Activated CD4-positive, alpha-beta T cell treated with anti-CD3 and anti-CD28 coated beads for 36 hours (primary cell): ENCODE measurements at regions of chrX and their contacts with region 1.

Region 1: GRCh38 chrX:155263854-155264628 is at the start of gene RAB39B:
- DNase-seq: peak; percentile 88
- ATAC-seq: peak; percentile 90
- H3K4me3 Mint-ChIP-seq: peak within 1 kb of the TSS; percentile 89
- H3K27ac Mint-ChIP-seq: peak within 1 kb of the TSS; percentile 94
- H3K4me1 Mint-ChIP-seq: peaks cover 21% of the 10 kb centered on the region
- H3K27me3 Mint-ChIP-seq: no peaks in the 10 kb centered on the region
- total RNA-seq, gene RAB39B: 16.4 to 17.2 TPM

Region 2: GRCh38 chrX:155612312-155613224 is 348.5 kb after region 1 on chrX and contains the start of gene TMLHE:
- CTCF ChIA-PET with region 1: no interaction called
- POLR2A ChIA-PET with region 1: no interaction called
- intact Hi-C with region 1: loop called in 1 of 2 experiments (anchors 1 kb)
- DNase-seq: peak; percentile 82
- ATAC-seq: peak; percentile 97
- H3K4me3 Mint-ChIP-seq: peak within 1 kb of the TSS; percentile 90
- H3K27ac Mint-ChIP-seq: peak within 1 kb of the TSS; percentile 94
- H3K4me1 Mint-ChIP-seq: peaks cover 23% of the 10 kb centered on the region
- H3K27me3 Mint-ChIP-seq: no peaks in the 10 kb centered on the region
- total RNA-seq, gene TMLHE: 13.3 to 16.5 TPM

Region 3: DNA sequence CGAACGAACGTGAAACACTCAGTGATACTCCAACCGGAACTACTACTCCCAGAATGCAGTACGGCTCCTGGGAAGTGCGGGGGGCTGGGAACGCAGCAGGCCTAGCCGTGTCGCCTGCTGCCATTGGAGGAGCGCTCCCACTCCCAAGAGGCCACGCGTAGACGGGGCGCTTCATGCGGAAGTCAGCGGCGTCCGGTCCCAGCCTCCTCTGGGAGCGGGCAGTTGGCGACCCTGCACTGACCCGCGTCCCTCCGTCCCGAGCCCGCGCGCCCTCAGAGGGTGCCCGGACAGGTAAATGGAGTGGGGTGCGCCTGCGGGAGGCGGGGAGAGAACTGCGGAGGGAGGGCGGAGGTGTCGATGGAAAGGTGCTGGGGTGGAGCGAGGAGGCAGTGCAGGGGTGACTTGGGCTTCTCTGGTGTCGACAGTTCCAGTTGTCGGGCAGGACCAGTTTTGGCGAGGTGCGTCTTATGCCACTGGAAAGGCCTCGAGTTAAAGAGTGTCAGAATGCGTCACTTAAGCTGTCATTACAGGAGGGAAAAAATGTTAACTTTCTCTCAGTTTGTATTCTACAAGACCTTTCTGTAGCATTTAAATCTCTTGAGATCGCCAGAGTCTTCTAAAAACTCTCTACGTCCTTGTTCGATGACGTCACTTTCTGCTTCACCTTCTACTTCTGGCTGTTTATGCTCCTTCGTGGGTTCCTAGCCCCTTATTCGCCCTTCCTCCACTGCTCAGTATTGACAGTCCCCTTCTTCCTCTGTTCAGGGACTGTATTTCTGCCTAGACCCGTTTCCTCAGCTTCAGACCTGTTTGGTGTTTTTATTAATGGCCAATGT is 617.3 kb after region 1 on chrX and contains the start of gene VAMP7:
- CTCF ChIA-PET with region 1: no interaction called
- POLR2A ChIA-PET with region 1: no interaction called
- intact Hi-C with region 1: loop called (anchors 5 kb)
- DNase-seq: peak; percentile 89
- ATAC-seq: peak; percentile 99
- H3K4me3 Mint-ChIP-seq: peak within 1 kb of the TSS; percentile 90
- H3K27ac Mint-ChIP-seq: peak within 1 kb of the TSS; percentile 88
- H3K4me1 Mint-ChIP-seq: peaks cover 25% of the 10 kb centered on the region
- H3K27me3 Mint-ChIP-seq: no peaks in the 10 kb centered on the region
- total RNA-seq, gene VAMP7: 34.9 to 37.2 TPM